BJ (cell line): ENCODE measurements at regions of chr11 and their contacts with region 1.

Region 1: GRCh38 chr11:16607675-16608644 is 130.5 kb upstream of the C11orf58 start:
- DNase-seq: no peak
- H3K4me3 ChIP-seq: peak overlapping the region; percentile 53
- H3K27me3 ChIP-seq: peaks cover 42% of the 10 kb centered on the region
- CTCF ChIP-seq: no peak

Region 2: GRCh38 chr11:16217631-16218030 is 390.3 kb before region 1 on chr11:
- CTCF ChIA-PET with region 1: no interaction called
- POLR2A ChIA-PET with region 1: interaction called, 13 read pairs
- DNase-seq: no peak
- H3K4me3 ChIP-seq: no peak overlapping the region
- H3K27me3 ChIP-seq: no peaks in the 10 kb centered on the region
- CTCF ChIP-seq: no peak

Region 3: DNA sequence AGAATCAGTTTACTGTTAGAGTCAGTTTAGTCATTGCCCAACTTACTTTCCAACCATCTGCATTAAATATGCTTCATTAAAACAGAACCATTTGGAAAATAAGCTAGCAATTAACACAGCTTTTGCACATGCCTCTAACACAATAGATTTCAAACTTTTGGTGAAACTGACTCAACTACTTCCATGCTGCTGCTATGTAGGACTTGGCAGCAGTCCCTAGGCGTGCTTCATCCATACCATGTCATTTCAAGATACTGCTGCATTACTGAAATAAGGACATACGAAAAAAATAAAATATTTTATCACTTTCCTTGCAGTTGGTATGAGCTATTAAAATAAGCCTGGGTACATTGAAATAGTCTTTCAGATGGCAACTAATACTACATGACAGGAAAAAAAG is 186.1 kb before region 1 on chr11:
- CTCF ChIA-PET with region 1: no interaction called
- POLR2A ChIA-PET with region 1: no interaction called
- DNase-seq: no peak
- H3K4me3 ChIP-seq: no peak overlapping the region
- H3K27me3 ChIP-seq: no peaks in the 10 kb centered on the region
- CTCF ChIP-seq: no peak

Region 4: GRCh38 chr11:16587670-16588069 is 20.3 kb before region 1 on chr11:
- CTCF ChIA-PET with region 1: no interaction called
- POLR2A ChIA-PET with region 1: no interaction called
- DNase-seq: no peak
- H3K4me3 ChIP-seq: no peak overlapping the region
- H3K27me3 ChIP-seq: no peaks in the 10 kb centered on the region
- CTCF ChIP-seq: no peak